MCF 10A (cell line): ENCODE measurements at regions of chrX and their contacts with region 1.

Region 1: DNA sequence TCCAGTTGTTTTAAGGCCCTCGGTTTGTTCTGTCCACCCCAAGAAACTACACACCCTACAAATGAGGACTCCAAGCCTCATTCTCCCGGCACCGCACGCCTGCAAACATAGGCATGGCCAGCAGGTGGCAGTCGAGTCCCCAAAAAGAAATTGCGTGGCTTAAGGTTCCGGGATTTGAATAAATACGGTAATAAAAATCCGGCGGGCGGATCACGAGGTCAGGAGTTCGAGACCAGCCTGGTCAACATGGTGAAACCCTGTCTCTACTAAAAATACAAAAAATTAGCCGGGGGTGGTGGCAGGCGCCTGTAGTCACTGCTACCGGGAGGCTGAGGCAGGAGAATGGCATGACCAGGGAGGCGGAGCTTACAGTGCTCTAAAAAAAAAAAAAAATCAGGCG is 21.8 kb upstream of the CSF2RA start:
- DNase-seq: peak; percentile 60
- H3K4me3 Mint-ChIP-seq: no peak overlapping the region
- H3K27ac Mint-ChIP-seq: no peak overlapping the region
- H3K4me1 Mint-ChIP-seq: no peaks in the 10 kb centered on the region
- H3K27me3 Mint-ChIP-seq: no peaks in the 10 kb centered on the region
- CTCF ChIP-seq: peak; percentile 78

Region 2: DNA sequence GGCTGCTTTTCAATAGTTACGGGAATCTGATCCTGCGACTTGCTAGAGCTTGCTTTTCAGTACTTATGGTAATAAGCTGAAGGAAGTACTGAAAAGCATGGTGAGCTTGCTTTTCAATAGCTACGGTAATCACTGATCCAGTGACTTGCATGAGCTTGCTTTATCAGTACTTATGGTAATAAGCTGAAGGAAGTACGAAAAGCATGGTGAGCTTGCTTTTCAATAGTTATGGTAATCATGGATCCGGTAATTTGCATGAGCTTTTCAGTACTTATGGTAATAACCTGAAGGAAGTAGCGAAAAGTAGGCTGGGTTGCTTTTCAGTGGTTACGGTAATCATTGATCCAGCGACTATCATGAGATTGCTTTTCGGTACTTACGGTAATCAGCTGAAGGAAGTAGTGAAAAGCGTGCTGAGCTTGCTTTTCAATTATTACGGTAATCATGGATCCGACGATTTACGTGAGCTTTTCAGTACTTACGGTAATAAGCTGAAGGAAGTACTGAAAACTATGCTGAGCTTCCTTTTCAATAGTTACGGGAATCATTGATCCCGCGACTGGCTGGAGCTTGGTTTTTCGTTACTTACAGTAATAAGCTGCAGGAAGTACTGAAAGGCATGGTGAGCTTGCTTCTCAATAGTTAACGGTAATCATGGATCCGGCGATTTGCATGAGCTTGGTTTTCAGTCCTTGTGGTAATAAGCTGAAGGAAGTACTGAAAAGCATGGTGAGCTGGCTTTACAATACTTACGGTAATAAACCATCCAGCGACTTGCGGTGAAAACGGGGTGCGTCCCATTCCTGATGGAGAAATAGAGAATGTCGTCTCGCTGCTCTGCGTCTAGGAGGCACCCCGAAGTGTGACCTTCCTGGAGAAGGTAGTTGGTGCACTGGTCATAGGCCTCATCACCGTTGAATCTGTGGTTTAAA is 40.9 kb before region 1 on chrX:
- CTCF ChIA-PET with region 1: no interaction called
- POLR2A ChIA-PET with region 1: no interaction called
- intact Hi-C with region 1: loop called (anchors 2 kb)
- DNase-seq: peak; percentile 3
- H3K4me3 Mint-ChIP-seq: no peak overlapping the region
- H3K27ac Mint-ChIP-seq: no peak overlapping the region
- H3K4me1 Mint-ChIP-seq: peaks cover 7% of the 10 kb centered on the region
- H3K27me3 Mint-ChIP-seq: no peaks in the 10 kb centered on the region
- CTCF ChIP-seq: no peak

Region 3: DNA sequence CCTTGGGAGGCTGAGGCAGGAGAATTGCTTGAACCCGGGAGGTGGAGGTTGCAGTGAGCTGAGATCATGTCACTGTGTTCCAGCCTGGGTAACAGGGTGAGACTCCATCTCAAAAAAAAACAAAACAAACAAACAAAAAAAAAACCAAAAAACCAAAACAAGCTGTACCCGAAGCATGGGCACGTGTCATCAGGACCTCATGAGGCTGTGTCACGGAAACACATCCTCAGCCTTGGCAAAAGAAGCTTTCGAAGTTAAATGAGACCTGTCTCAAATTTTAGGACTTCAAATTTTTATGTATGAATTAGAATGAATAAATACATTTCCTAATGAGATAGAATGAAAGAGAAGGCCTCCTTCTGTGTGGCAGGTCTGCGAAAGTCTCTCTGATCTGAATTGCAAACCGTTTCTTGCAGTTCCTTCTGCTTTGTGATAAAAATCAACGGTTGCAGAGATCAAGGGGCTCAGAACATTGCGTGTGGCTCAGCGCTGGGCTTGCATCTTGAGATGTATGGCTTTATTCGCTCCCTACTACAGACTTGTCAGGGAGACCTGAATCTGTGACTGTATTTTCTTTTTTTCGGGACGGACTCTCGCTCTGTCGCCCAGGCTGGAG is 14.9 kb before region 1 on chrX:
- CTCF ChIA-PET with region 1: no interaction called
- POLR2A ChIA-PET with region 1: no interaction called
- intact Hi-C with region 1: no loop called
- DNase-seq: no peak
- H3K4me3 Mint-ChIP-seq: no peak overlapping the region
- H3K27ac Mint-ChIP-seq: no peak overlapping the region
- H3K4me1 Mint-ChIP-seq: no peaks in the 10 kb centered on the region
- H3K27me3 Mint-ChIP-seq: no peaks in the 10 kb centered on the region
- CTCF ChIP-seq: no peak

Region 4: GRCh38 chrX:1391707-1392375 is 145.0 kb after region 1 on chrX and contains the start of gene SLC25A6:
- CTCF ChIA-PET with region 1: no interaction called
- POLR2A ChIA-PET with region 1: no interaction called
- intact Hi-C with region 1: loop called (anchors 10 kb)
- DNase-seq: peak; percentile 96
- H3K4me3 Mint-ChIP-seq: peak within 1 kb of the TSS; percentile 93
- H3K27ac Mint-ChIP-seq: peak within 1 kb of the TSS; percentile 96
- H3K4me1 Mint-ChIP-seq: peaks cover 27% of the 10 kb centered on the region
- H3K27me3 Mint-ChIP-seq: no peaks in the 10 kb centered on the region
- CTCF ChIP-seq: no peak
- total RNA-seq, gene SLC25A6: 319 and 463 TPM in 2 replicates

Region 5: DNA sequence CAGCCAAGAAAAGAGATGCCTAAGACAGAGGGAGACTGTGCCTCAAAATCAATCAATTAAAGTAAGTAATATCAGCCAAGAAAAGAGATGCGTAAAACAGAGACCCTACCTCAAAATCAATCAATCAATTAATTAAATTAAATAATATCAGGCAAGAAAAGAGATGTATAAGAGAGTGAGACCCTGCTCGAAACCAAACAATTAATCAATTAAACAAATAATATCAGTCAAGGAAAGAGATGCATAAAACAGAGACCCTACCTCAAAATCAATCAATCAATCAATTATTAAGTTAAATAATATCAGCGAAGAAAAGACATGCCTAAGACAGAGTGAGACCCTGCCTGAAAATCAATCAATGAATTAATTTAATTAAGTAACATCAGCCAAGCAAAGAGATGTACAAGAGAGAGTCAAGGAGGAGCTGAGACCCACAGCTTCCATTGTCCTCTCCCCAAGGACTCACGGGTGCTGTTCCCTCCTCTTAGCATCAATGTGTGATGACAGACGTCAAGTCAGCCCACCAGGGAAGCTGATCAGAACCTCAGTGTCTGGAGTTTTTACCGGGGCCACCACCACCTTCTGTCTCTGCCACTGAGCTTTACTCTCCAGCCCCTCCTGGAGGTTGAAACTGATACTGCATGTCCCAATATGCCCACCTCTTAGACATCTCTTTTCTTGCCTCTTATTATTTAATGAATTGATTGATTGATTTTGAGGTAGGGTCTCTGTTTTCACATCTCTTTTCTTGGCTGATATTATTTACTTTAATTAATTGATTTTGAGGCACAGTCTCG is 334.1 kb after region 1 on chrX:
- CTCF ChIA-PET with region 1: no interaction called
- POLR2A ChIA-PET with region 1: no interaction called
- intact Hi-C with region 1: loop called (anchors 5 kb)
- DNase-seq: peak; percentile 73
- H3K4me3 Mint-ChIP-seq: no peak overlapping the region
- H3K27ac Mint-ChIP-seq: no peak overlapping the region
- H3K4me1 Mint-ChIP-seq: peaks cover 12% of the 10 kb centered on the region
- H3K27me3 Mint-ChIP-seq: no peaks in the 10 kb centered on the region
- CTCF ChIP-seq: peak; percentile 74